CD4-positive, alpha-beta T cell (primary cell): ENCODE measurements at regions of chr5 and their contacts with region 1.

Region 1: GRCh38 chr5:173972925-173973615 is 15.9 kb upstream of the C5orf47 start:
- DNase-seq: peak; percentile 62 to 86 (median 68)
- ATAC-seq: peak; percentile 82
- H3K4me3 ChIP-seq: peak overlapping the region; percentile 45
- H3K4me3 Mint-ChIP-seq: peak overlapping the region; percentile 82
- H3K27ac ChIP-seq: no peak overlapping the region
- H3K27ac Mint-ChIP-seq: no peak overlapping the region
- H3K4me1 ChIP-seq: peaks cover 14% of the 10 kb centered on the region
- H3K4me1 Mint-ChIP-seq: peaks cover 12% of the 10 kb centered on the region
- H3K27me3 ChIP-seq: peaks cover 0 to 4% of the 10 kb centered on the region in 2 experiments
- H3K27me3 Mint-ChIP-seq: peaks cover 20% of the 10 kb centered on the region
- CTCF ChIP-seq: peak; percentile 79

Region 2: GRCh38 chr5:172958331-172959046 is 1014.6 kb before region 1 on chr5:
- CTCF ChIA-PET with region 1: no interaction called
- POLR2A ChIA-PET with region 1: no interaction called
- intact Hi-C with region 1: loop called in 1 of 2 experiments (anchors 10 kb)
- DNase-seq: peak; percentile 35 to 83 (median 56)
- ATAC-seq: peak; percentile 49
- H3K4me3 ChIP-seq: peak overlapping the region; percentile 93
- H3K4me3 Mint-ChIP-seq: peak overlapping the region; percentile 97
- H3K27ac ChIP-seq: peak overlapping the region; percentile 59 to 76
- H3K27ac Mint-ChIP-seq: peak overlapping the region; percentile 96
- H3K4me1 ChIP-seq: peaks cover 21% of the 10 kb centered on the region
- H3K4me1 Mint-ChIP-seq: peaks cover 44% of the 10 kb centered on the region
- H3K27me3 ChIP-seq: no peaks in the 10 kb centered on the region
- H3K27me3 Mint-ChIP-seq: no peaks in the 10 kb centered on the region
- CTCF ChIP-seq: no peak

Region 3: DNA sequence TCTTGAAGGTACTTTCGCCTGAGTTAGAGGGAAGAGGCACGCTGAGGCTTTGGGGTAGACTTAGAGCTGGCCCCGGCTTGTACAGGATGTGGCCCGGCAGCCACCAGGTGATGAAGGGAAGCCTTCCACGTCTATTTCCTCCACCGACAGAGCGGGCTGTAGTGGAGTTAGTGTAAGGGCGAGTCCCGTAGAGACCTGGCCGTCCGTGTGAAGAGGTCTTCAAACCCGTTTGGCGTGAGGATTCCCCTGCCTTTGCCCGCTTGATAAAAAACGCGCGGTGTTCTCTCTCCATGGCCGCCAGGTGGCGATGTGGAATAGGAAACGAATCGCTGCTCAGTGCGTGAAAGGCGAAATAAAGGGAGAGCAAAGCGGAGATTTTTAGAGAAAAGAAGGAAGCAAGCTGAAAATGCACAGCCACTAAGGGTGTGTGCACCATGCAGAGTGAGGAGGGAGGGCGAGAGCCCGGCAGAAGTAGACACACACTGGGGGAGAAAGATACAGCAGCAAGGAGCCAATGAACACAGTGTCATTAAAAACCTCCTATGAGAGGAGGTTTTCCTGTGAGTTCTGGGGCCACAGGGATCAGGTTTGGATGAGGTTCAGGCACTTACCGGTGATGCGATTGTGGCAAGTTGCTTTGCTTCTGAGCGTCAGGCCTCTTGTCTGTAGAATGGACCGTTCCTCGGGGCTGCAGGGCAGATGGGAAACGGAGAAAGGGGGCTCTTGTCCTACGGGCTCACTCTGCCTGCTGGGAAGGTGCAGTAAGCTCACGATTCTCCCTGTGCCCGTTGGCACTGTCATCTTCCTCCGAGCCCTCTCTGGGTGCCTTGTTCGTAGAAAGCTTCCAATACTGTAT is 679.0 kb before region 1 on chr5:
- CTCF ChIA-PET with region 1: interaction called, 3 read pairs
- POLR2A ChIA-PET with region 1: no interaction called
- intact Hi-C with region 1: loop called in 1 of 2 experiments (anchors 2 kb)
- DNase-seq: peak; percentile 36 to 76 (median 51)
- ATAC-seq: peak; percentile 71
- H3K4me3 ChIP-seq: peak overlapping the region; percentile 26
- H3K4me3 Mint-ChIP-seq: peak overlapping the region; percentile 34
- H3K27ac ChIP-seq: no peak overlapping the region
- H3K27ac Mint-ChIP-seq: no peak overlapping the region
- H3K4me1 ChIP-seq: peaks cover 14% of the 10 kb centered on the region
- H3K4me1 Mint-ChIP-seq: peaks cover 13% of the 10 kb centered on the region
- H3K27me3 ChIP-seq: peaks cover 35 to 39% of the 10 kb centered on the region in 2 experiments
- H3K27me3 Mint-ChIP-seq: peaks cover 64% of the 10 kb centered on the region
- CTCF ChIP-seq: peak; percentile 76

Region 4: DNA sequence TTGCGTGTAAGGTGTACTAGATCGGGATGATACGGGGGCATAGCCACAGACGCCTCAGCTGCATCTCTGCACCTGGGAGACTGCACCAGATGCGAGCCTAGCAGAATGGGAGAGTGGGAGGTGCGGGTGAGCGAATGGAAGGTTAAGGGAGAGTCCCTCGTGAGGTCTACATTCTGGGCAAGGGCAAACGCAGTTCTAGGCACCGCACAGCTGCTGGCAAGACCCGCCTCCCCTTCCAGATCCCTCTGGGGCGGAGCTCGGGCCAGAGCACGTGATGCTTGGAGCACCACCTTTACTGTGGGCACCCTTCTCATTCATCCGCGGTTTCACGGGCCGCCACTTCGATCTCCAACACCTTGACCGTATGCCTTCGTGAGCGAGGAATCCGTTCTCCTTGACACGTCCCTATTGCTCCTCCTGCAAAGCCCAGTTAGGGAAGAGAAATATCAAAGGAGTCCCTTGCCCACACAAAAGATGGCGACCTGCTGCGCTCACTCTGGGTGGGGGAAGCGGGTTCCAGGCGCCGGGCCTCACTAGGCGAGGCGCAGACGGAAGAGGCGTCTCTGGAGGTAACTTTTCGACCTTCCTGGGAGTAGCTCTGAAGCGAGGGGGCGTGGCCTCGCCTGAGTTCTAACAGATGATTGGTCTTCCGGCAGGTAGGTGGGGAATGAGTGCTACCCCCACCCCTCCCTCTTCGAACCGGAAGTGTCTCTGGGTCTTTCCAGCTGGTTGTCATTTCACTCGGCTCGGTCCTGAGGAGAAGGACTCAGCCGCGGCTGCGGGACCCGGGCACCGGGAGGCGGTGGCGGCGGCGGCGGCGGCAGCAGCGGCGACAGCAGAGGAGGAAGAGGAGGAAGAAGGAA is 85.2 kb before region 1 on chr5 and contains the start of gene CPEB4:
- CTCF ChIA-PET with region 1: interaction called, 3 read pairs
- POLR2A ChIA-PET with region 1: interaction called, 6 read pairs
- intact Hi-C with region 1: loop called in 1 of 2 experiments (anchors 5 kb)
- DNase-seq: peak; percentile 92 to 100 (median 96)
- ATAC-seq: peak; percentile 94
- H3K4me3 ChIP-seq: peak within 1 kb of the TSS; percentile 87
- H3K4me3 Mint-ChIP-seq: peak within 1 kb of the TSS; percentile 99
- H3K27ac ChIP-seq: peak within 1 kb of the TSS; percentile 77 to 89
- H3K27ac Mint-ChIP-seq: peak within 1 kb of the TSS; percentile 91
- H3K4me1 ChIP-seq: peaks cover 47% of the 10 kb centered on the region
- H3K4me1 Mint-ChIP-seq: peaks cover 90% of the 10 kb centered on the region
- H3K27me3 ChIP-seq: no peaks in the 10 kb centered on the region
- H3K27me3 Mint-ChIP-seq: no peaks in the 10 kb centered on the region
- CTCF ChIP-seq: no peak
- total RNA-seq, gene CPEB4: 18.3 to 19.2 TPM

Region 5: GRCh38 chr5:174020397-174021296 is 47.6 kb after region 1 on chr5:
- CTCF ChIA-PET with region 1: no interaction called
- POLR2A ChIA-PET with region 1: no interaction called
- intact Hi-C with region 1: no loop called
- DNase-seq: peak in 1 of 14 experiments; percentile 8
- ATAC-seq: no peak
- H3K4me3 ChIP-seq: no peak overlapping the region
- H3K4me3 Mint-ChIP-seq: no peak overlapping the region
- H3K27ac ChIP-seq: no peak overlapping the region
- H3K27ac Mint-ChIP-seq: no peak overlapping the region
- H3K4me1 ChIP-seq: no peaks in the 10 kb centered on the region
- H3K4me1 Mint-ChIP-seq: no peaks in the 10 kb centered on the region
- H3K27me3 ChIP-seq: peaks cover 3 to 5% of the 10 kb centered on the region in 2 experiments
- H3K27me3 Mint-ChIP-seq: peaks cover 45% of the 10 kb centered on the region
- CTCF ChIP-seq: no peak

Region 6: GRCh38 chr5:174311531-174312269 is 338.6 kb after region 1 on chr5:
- CTCF ChIA-PET with region 1: no interaction called
- POLR2A ChIA-PET with region 1: no interaction called
- intact Hi-C with region 1: loop called in 1 of 2 experiments (anchors 5 kb)
- DNase-seq: peak; percentile 19 to 72 (median 38)
- ATAC-seq: peak; percentile 32
- H3K4me3 ChIP-seq: peak overlapping the region; percentile 19
- H3K4me3 Mint-ChIP-seq: no peak overlapping the region
- H3K27ac ChIP-seq: no peak overlapping the region
- H3K27ac Mint-ChIP-seq: no peak overlapping the region
- H3K4me1 ChIP-seq: peaks cover 9% of the 10 kb centered on the region
- H3K4me1 Mint-ChIP-seq: no peaks in the 10 kb centered on the region
- H3K27me3 ChIP-seq: peaks cover 24 to 27% of the 10 kb centered on the region in 2 experiments
- H3K27me3 Mint-ChIP-seq: peaks cover 69% of the 10 kb centered on the region
- CTCF ChIP-seq: peak; percentile 61